ENCODE measurements at regions of chr2 and their contacts with region 1.

Region 1: DNA sequence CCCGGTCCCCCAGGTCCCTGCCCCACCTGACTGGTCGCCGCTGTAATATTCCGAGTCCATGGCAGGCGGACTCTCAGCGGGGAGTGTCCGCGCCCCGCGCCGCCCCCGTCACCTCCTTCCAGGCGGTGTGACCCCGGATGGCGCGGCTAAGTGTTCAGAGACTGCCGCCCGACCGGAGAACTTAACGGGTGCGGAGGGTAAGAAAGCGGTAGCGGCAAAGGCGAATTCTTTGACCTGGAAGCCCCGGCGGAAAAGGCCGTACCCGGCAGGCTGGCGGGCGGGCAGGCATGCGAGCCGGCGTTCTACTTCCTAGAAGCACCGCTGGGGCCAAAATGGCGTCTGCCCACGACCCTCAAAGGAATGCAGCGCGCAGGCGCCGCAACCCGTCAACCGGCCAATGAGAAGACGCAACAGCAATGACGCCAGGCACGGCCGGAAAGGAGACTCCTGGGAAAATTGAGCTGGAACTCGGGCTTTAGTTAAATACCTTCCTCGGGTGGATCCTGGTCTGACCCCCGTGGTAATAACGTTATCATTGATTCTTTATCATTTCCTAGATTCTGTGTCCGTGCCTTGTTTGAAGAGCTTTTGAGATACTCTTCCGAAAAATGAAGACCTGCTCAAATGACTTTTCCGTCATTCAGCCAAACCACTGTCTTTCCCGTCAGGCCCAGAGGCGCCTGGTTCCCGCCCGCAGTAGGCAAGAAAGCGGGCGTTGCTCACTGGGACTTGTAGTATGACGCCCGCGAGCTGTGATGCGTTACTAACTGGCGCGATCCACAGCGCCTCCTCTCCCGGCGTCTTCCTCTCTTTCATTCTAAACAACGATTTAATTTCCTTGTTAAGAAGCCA is at the start of gene IWS1:
- DNase-seq: peak; percentile 94

Region 2: DNA sequence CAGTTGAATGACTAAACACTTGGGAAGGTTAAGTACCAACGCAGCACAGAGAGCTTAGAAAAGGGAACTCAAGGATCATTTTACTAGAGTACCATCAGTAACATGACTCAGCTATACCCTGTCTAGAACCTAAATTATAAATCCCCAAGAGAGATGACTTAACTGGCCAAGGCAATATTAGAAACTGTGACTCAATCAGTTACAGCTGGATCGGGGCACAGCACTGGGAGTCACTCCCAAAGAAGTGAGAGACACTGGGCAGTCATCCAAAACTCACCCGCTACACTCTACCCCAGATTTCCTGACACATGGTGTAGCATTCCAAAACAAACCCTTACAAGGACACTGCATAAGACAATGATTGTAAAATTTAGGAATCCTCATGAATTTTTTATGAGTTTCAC is 17.7 kb before region 1 on chr2:
- CTCF ChIA-PET with region 1: no interaction called
- POLR2A ChIA-PET with region 1: interaction called, 33 read pairs
- DNase-seq: peak; percentile 69

Region 3: GRCh38 chr2:127514485-127514884 is 11.9 kb before region 1 on chr2:
- CTCF ChIA-PET with region 1: no interaction called
- POLR2A ChIA-PET with region 1: interaction called, 14 read pairs
- DNase-seq: no peak

Region 4: GRCh38 chr2:127541809-127542208 is 15.4 kb after region 1 on chr2:
- CTCF ChIA-PET with region 1: no interaction called
- POLR2A ChIA-PET with region 1: interaction called, 19 read pairs
- DNase-seq: no peak

Region 5: GRCh38 chr2:127597984-127598380 is 71.6 kb after region 1 on chr2:
- CTCF ChIA-PET with region 1: no interaction called
- POLR2A ChIA-PET with region 1: no interaction called
- DNase-seq: no peak